Activated CD4-positive, alpha-beta T cell treated with anti-CD3 and anti-CD28 coated beads for 36 hours (primary cell): ENCODE measurements at regions of chr10 and their contacts with region 1.

Region 1: DNA sequence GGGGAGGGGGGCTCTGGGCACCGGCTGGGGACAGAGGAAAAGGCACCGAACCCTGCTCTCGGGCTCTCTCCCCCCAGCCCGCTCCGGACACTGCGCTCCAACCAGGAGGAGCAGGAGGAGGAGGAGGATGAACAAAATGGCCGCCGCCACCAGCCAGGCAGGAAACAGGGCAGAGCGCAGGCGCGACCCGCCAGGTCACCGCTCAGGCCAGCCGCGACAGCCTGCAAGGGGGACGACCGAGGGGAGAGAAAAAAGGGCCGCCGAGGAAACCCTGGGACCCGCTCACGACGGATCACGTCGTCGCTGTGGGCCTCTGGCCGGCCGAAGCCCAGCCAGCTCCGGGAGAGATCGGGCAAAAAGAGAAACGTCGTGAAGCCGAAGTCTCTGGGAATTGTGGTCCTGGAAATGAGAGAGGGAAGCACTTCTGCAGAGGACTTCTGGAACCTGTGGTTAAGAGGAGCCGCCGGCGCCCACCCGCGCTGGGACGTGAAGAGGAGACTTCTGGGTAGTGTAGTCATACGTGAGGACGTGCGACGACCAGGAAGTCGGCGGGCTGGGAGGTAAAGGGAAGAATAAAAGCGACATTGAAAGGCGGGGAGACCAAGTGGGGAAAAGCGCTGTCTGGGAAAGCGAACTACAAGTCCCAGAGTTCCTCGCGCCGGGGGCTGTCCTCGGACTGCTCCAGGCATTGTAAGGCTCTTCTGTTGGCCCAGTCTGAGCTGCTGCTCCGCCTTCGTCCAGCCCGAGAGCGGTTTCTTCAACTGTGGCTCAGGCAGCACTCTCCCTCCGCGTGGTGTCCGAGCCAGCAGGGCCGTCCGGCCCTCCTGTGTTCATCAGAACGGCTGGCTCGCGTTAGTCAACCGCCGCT is at the start of gene TIAL1:
- DNase-seq: peak; percentile 96
- ATAC-seq: peak; percentile 90
- H3K4me3 Mint-ChIP-seq: peak within 1 kb of the TSS; percentile 92
- H3K27ac Mint-ChIP-seq: peak within 1 kb of the TSS; percentile 93
- H3K4me1 Mint-ChIP-seq: peaks cover 49% of the 10 kb centered on the region
- H3K27me3 Mint-ChIP-seq: no peaks in the 10 kb centered on the region
- total RNA-seq, gene TIAL1: 187 to 197 TPM

Region 2: DNA sequence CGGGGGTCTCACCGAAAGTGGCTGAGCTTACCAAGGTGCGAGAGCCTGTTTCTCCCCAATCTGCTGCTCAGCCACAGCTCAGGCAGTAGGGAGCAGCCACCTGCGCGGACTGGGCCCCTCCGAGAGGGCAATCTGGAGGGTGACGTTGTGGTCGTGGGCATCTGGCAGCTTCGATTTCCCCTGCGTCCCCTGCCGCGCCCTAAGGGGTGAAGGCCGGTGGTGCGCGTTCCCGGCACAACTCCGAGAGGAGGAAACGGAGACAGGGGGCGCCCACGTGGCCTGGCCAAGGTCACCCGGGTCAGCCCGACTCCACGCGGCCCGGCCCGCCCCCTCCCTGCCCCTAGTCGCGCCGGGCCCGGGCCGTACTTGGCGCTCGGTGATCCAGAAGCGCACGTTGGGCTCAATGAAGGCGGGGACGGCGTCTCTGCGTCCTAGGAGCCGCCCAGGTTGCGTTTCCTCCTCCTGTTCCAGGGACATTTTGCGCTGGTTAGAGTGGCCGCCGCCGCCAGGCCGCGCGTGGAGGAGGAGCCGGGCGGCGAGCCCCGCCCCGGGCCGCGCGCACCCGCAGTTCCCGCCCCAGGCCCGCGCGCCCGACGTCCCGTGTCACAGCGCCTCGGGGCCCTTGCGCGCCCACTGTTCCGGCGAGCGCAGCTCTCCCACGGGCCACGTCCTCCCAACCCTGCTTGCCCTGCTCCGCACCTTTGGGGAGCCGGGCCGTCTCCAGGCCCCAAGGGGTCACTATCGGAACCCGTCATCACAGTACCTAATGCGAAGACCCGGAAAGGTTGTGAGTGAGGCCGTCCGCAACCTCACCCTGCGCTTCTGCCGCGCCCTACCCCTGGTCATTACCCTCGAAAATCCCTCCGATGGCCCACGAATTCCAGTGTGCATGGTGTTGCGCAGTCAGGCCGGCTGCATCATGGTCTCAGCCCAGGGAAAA is 431.3 kb before region 1 on chr10 and contains the start of gene SFXN4:
- CTCF ChIA-PET with region 1: no interaction called
- POLR2A ChIA-PET with region 1: no interaction called
- intact Hi-C with region 1: loop called in 1 of 2 experiments (anchors 1 kb)
- DNase-seq: peak; percentile 87
- ATAC-seq: peak; percentile 94
- H3K4me3 Mint-ChIP-seq: peak within 1 kb of the TSS; percentile 86
- H3K27ac Mint-ChIP-seq: peak within 1 kb of the TSS; percentile 94
- H3K4me1 Mint-ChIP-seq: peaks cover 40% of the 10 kb centered on the region
- H3K27me3 Mint-ChIP-seq: no peaks in the 10 kb centered on the region
- total RNA-seq, gene SFXN4: 38.7 to 44.7 TPM

Region 3: GRCh38 chr10:119178372-119179119 is 418.2 kb before region 1 on chr10 and contains the start of gene PRDX3:
- CTCF ChIA-PET with region 1: no interaction called
- POLR2A ChIA-PET with region 1: no interaction called
- intact Hi-C with region 1: loop called (anchors 1 to 2 kb)
- DNase-seq: peak; percentile 98
- ATAC-seq: peak; percentile 95
- H3K4me3 Mint-ChIP-seq: peak within 1 kb of the TSS; percentile 88
- H3K27ac Mint-ChIP-seq: peak within 1 kb of the TSS; percentile 95
- H3K4me1 Mint-ChIP-seq: peaks cover 36% of the 10 kb centered on the region
- H3K27me3 Mint-ChIP-seq: no peaks in the 10 kb centered on the region
- total RNA-seq, gene PRDX3: 160 to 217 TPM

Region 4: DNA sequence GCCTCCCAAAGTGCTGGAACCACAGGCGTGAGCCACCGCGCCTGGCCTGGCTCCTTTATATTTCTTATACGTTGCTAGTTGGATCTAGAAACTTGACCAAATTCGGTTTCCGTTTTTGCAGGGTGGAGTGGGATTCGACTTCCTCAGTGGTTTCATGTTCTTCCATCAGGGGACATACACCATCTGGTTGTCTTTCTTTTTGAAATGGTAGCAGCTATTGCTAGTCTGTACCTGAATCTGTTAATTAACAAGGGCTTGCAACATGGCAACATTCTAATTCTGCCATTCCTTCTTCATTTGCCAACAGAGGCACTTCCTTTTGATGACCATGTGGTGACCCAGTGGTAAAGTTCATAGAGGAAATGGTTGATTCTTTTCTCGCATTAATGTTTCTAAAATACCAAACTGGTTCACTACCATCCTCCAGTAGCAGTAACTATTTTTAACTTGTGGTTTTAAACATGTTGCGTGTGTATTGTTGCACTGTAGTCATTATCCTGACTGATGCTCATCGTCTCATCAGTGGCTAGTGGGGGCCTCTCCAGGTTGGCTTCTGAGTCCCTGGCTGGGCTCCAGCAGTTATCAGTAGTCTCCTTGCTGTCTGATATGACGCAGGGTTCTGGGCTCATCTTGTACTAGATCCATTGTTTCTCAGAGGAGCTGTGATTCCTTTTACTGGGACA is 213.5 kb before region 1 on chr10:
- CTCF ChIA-PET with region 1: no interaction called
- POLR2A ChIA-PET with region 1: no interaction called
- intact Hi-C with region 1: no loop called
- DNase-seq: no peak
- ATAC-seq: peak; percentile 30
- H3K4me3 Mint-ChIP-seq: no peak overlapping the region
- H3K27ac Mint-ChIP-seq: no peak overlapping the region
- H3K4me1 Mint-ChIP-seq: peaks cover 6% of the 10 kb centered on the region
- H3K27me3 Mint-ChIP-seq: no peaks in the 10 kb centered on the region

Region 5: DNA sequence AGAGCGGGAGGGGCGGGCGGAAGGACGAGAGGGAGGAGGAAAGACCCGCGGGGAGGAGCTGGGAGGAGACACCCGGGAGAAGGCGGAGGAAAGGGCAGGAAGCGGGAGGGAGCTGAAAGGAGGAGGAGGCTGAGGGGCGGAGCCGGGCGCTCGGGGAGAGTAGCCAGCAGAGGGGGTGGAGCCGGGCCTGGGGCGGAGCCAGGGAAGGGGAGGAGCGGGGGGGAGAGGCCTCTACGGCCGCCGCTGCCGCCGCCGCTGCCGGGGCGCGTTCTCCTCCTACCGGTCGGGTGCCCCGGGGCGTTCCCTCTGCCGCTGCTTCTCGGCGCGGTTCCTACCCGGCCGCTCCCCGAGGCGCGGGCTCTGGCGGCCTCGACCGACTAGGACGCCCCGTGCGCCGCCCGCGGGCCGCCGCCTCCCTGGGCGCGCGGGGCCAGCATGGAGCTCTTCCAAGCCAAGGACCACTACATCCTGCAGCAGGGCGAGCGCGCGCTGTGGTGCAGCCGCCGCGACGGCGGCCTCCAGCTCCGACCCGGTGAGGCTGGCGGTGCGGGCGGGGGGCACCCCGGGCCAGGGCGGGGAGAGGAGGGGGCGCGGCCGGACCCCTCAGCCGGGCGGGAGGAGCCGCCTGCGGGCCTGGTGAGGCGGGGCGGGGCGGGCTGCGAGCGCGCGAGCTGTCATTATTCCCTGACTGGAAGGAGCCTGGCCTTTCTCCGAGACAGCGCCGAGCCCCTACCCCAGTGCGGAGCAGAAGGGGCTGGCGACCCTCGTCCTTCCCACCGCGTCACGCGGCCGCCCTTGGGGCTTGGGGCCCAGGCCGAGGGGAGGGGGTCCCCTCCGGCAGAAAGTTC is 129.3 kb after region 1 on chr10 and contains the start of gene INPP5F:
- CTCF ChIA-PET with region 1: no interaction called
- POLR2A ChIA-PET with region 1: no interaction called
- intact Hi-C with region 1: loop called (anchors 1 kb)
- DNase-seq: peak; percentile 100
- ATAC-seq: peak; percentile 95
- H3K4me3 Mint-ChIP-seq: peak within 1 kb of the TSS; percentile 86
- H3K27ac Mint-ChIP-seq: peak within 1 kb of the TSS; percentile 73
- H3K4me1 Mint-ChIP-seq: peaks cover 47% of the 10 kb centered on the region
- H3K27me3 Mint-ChIP-seq: no peaks in the 10 kb centered on the region
- total RNA-seq, gene INPP5F: 10.9 to 12.6 TPM

Region 6: DNA sequence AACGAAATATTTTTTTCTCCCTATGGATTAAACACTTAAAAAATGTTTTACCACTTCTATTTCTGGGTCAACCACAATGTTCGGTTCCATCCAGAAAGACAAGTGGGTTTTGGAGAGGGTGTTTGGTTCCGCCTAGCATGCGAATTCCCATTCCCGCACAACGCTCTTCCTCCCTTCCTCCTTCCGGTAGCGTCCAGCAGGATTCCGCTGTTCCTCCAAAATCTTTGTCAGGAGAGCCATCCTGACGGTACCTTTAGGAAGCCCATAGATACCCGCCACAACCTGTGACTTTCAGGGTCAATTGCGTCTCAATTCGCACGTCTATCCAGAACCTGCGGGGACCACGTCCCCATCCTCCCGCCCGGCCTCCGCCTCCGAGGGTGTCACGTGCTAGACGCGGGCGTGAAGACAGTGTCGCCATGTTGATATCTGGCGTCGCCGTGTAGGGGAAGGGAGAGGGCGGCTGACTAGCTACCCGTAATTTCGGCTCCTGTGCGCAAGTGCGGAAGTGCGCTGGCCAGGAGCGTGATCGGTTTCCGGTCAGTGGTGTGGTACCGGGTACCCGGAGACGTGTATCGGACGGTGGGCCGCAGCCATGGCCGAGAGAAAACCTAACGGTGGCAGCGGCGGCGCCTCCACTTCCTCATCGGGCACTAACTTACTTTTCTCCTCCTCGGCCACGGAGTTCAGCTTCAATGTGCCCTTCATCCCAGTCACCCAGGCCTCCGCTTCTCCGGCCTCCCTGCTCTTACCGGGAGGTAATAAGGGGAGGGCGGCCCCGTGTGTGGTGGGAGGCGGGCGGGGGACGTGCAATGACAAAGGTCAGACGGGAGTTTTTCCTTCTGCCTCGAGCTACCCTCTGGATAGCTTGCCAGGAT is 295.7 kb after region 1 on chr10 and contains the start of gene SEC23IP:
- CTCF ChIA-PET with region 1: interaction called, 4 read pairs
- POLR2A ChIA-PET with region 1: interaction called, 6 read pairs
- intact Hi-C with region 1: loop called (anchors 1 kb)
- DNase-seq: peak; percentile 96
- ATAC-seq: peak; percentile 100
- H3K4me3 Mint-ChIP-seq: peak within 1 kb of the TSS; percentile 84
- H3K27ac Mint-ChIP-seq: peak within 1 kb of the TSS; percentile 95
- H3K4me1 Mint-ChIP-seq: peaks cover 43% of the 10 kb centered on the region
- H3K27me3 Mint-ChIP-seq: no peaks in the 10 kb centered on the region
- total RNA-seq, gene SEC23IP: 70.3 to 87.2 TPM

Region 7: DNA sequence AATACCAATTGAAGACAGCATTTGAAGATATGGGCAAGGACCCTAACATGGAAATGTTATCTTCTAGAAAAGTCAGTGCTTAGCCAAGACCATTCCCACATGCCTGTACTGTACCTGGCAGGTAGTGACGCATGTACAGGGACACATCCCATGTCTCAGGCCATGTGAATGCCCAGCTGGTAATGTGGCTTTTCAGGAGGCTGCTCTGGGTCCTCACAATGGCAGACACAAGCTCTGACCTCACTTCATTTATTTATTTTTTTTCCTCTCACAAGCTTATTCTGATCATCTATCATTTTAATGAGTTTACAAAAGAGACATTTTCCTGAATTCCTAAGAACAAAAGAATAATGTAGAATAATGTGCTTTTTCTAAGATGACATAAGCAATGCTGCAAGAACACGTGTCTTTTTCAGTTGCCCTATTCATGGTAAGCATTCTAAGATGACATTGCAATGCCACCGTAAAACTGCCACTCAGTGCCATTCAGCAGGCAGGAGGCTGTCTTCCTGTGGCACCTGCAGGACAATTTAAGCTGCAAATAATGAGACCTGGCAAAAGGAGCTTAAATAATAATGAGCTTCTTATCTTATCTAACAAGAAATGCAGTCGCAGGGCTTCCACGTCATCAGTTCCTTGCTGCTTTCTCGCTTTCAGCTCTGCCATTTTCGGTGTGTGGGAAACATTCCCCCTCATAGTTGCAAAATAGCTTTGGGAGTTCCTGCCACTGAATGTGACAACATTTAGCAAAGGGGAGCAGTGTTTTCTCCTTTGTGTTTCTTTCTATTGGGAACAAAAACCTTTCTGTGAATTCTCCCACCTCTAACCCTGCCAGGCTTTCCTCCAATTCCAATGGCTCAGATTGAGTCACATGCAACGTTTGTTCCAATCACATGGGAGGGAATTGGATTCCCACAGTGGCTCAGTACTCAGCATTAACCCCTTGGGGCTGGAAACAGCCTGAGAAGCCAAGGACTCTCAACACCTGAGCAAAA is 408.7 kb after region 1 on chr10:
- CTCF ChIA-PET with region 1: no interaction called
- POLR2A ChIA-PET with region 1: no interaction called
- intact Hi-C with region 1: no loop called
- DNase-seq: no peak
- ATAC-seq: no peak
- H3K4me3 Mint-ChIP-seq: no peak overlapping the region
- H3K27ac Mint-ChIP-seq: no peak overlapping the region
- H3K4me1 Mint-ChIP-seq: no peaks in the 10 kb centered on the region
- H3K27me3 Mint-ChIP-seq: peaks cover 28% of the 10 kb centered on the region